Caco-2 (cell line): ENCODE measurements at regions of chr9 and their contacts with region 1.

Region 1: DNA sequence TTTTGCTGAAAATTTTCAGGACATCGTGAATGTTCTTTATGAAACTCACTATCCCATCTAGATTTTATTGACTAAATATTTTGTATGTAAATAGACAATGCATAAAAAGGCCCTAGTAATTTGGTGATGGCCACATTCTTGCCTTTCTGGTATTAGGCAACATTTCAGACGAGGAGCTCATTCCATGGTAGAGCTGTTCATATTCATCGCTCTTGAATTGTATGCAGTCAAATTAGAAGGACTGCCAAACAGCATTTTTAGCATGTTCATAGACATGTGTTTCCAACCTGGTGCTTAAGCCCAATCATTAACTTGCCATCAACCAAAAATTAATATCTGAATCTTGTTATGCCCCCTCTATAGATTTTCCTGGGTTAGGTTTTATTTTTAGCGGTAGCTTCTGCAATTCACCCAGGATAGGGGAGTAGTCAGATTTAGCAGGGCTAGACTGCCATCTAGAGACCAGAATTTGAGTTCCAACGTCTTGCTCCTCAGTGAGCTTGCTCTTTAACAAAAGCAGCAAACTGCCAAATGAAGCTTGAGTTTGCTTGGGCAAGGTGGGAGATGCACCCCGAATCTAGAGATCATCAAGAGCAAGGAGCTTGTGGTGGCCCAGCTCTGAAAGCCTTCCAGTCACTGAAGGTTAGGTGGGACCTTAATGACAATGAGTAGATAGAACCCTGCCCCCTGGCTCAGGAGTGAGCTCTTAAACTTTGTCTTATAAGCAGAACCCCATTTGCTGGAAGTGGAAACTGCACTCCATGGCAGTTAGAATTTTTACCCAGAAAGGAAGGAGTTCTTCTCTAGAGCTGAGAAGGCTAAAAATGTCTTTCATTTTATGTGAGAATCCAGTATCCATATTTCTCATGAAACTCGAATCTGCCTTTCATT is 456.2 kb downstream of the RASEF start:
- DNase-seq: peak; percentile 46 to 55
- H3K4me3 ChIP-seq: no peak overlapping the region
- H3K4me3 Mint-ChIP-seq: no peak overlapping the region
- H3K27ac Mint-ChIP-seq: no peak overlapping the region
- H3K4me1 ChIP-seq: no peaks in the 10 kb centered on the region
- H3K4me1 Mint-ChIP-seq: no peaks in the 10 kb centered on the region
- H3K27me3 ChIP-seq: no peaks in the 10 kb centered on the region
- H3K27me3 Mint-ChIP-seq: no peaks in the 10 kb centered on the region
- CTCF ChIP-seq: peak; percentile 28 to 41

Region 2: DNA sequence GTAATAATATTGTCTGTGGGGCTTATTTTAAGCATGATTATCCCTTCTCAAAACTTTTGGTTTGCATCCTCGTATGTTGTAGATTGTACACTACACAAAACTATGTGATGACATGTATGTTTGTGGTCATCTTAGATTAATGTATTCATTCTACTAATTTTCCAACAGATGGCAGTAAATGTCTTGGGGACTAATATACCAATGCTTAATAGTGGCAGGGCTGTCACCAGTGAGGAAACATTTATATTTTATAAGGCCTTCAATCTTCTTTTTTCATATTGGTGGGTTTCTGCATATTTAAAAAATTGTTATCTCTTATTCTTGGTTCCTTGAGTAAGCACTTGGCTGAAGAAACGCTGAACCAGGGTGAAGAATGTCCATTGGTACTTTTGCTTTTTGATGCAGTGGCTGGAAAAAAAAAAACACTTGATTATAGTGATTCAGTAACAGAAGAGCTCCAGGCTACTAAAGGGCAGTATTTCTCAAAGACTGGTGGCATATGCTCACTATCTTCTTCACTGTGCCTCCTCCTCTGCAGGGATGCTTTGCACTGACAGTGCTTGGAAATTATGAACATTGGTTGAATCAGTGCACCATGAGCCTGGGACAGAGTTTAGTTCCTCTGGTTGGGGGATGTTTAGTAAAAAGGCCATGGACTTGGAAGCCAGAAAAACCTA is 74.1 kb before region 1 on chr9:
- CTCF ChIA-PET with region 1: no interaction called
- POLR2A ChIA-PET with region 1: no interaction called
- intact Hi-C with region 1: loop called (anchors 1 kb)
- DNase-seq: no peak
- H3K4me3 ChIP-seq: no peak overlapping the region
- H3K4me3 Mint-ChIP-seq: no peak overlapping the region
- H3K27ac Mint-ChIP-seq: no peak overlapping the region
- H3K4me1 ChIP-seq: no peaks in the 10 kb centered on the region; the same call in 1 of the 2 replicates
- H3K4me1 Mint-ChIP-seq: no peaks in the 10 kb centered on the region
- H3K27me3 ChIP-seq: no peaks in the 10 kb centered on the region
- H3K27me3 Mint-ChIP-seq: no peaks in the 10 kb centered on the region
- CTCF ChIP-seq: no peak

Region 3: GRCh38 chr9:82549174-82549821 is 57.4 kb before region 1 on chr9:
- CTCF ChIA-PET with region 1: no interaction called
- POLR2A ChIA-PET with region 1: no interaction called
- intact Hi-C with region 1: loop called (anchors 5 kb)
- DNase-seq: no peak
- H3K4me3 ChIP-seq: no peak overlapping the region
- H3K4me3 Mint-ChIP-seq: no peak overlapping the region
- H3K27ac Mint-ChIP-seq: no peak overlapping the region
- H3K4me1 ChIP-seq: no peaks in the 10 kb centered on the region
- H3K4me1 Mint-ChIP-seq: no peaks in the 10 kb centered on the region
- H3K27me3 ChIP-seq: no peaks in the 10 kb centered on the region
- H3K27me3 Mint-ChIP-seq: no peaks in the 10 kb centered on the region
- CTCF ChIP-seq: no peak

Region 4: DNA sequence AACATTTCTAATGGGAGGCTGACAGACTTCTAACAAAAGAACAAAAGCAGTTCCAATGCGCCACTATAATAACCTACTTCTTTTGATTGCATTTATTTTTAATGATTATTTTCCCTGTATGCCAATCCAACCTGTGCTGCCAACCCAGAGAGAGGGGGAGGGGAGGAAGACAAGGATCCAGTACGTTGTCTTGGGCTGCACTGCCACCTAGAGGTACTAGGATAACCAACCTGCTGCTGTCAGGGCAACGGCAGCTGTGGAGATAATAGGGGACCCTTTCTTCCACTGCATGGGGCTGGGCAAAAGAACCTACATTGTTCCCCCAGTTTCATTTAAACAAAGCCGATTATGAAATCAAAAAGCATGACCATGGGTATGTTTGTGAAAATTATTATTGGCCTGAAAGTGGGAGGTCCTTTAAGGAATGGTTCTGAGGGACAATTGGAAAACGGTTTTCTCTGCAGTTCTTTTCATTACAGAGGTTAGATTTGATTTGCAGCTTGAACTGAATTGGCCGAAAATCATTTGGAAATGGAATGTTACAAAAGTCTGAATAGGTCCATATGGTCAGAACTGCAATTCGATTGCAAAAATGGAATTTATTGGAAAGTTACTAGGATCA is 354.9 kb after region 1 on chr9:
- CTCF ChIA-PET with region 1: no interaction called
- POLR2A ChIA-PET with region 1: no interaction called
- intact Hi-C with region 1: loop called (anchors 2 kb)
- DNase-seq: peak; percentile 62 to 65
- H3K4me3 ChIP-seq: no peak overlapping the region
- H3K4me3 Mint-ChIP-seq: no peak overlapping the region
- H3K27ac Mint-ChIP-seq: no peak overlapping the region
- H3K4me1 ChIP-seq: no peaks in the 10 kb centered on the region
- H3K4me1 Mint-ChIP-seq: no peaks in the 10 kb centered on the region
- H3K27me3 ChIP-seq: no peaks in the 10 kb centered on the region
- H3K27me3 Mint-ChIP-seq: peaks cover 2% of the 10 kb centered on the region
- CTCF ChIP-seq: peak; percentile 64 to 68